ENCODE measurements at regions of chr3 and their contacts with region 1.

Region 1: DNA sequence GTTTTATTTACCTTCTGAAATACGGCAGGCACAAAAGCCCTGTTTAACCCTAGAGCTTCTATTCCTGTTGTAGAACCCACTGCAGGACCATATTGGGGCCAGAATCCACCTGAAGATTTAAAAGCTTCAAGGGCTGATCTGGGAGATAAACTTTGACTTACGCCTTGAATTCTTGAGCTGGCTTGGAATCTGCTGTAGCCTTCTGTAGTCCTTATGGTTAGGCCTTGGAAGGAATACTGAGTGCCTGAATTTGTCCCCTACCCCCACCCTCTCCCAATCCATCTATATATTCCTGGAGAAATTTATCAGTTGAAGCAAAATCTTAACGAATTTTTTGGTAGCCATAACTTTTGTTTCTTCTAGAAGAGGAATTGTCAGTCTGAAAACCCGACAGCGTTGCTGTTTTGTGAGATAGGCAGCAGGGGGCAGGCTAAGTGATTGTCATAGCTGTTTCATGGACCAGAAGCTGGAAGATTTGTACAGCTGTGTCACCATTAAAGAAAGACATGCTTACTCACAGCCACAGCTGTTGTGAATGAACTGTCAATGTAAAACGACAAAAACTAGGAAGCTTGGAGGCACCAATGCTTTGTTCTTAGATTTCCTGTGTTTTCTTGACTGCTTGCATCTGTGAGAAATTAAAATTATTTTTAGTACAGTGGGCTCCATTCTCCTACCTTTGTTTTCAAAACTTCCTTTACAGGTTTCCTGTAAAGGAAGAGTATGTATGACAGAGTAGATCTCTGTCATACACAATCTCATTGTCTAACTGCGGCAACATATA is 12.8 kb downstream of the LXN start:
- DNase-seq: peak; percentile 65
- ATAC-seq: peak; percentile 93
- H3K4me3 Mint-ChIP-seq: no peak overlapping the region
- H3K27ac Mint-ChIP-seq: no peak overlapping the region
- H3K4me1 Mint-ChIP-seq: peaks cover 13% of the 10 kb centered on the region
- H3K27me3 Mint-ChIP-seq: no peaks in the 10 kb centered on the region
- CTCF ChIP-seq: peak; percentile 60

Region 2: DNA sequence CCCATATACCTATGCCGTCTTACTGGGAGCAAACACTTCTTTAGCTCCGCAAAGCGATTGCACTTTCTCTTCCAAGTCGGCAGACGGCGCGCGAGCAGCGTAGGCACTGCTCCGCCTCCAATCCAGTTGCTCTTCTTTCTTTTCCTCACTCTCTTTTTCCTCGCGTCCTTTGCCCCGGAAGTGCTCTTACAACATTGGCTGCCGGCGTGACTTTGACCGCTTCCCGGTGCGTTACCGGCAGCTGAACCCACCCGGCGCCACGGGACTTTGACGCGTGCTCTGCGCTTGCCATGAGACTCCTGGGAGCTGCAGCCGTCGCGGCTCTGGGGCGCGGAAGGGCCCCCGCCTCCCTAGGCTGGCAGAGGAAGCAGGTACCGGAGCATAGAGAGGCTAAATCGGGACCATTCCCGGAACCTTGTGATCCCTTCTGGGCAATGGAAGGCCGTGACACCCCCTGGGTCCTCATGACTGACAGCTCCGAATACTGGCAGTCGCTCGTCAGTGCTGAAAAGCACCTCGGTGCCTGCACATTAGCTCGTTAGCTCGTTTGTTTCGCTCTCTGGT is 15.2 kb before region 1 on chr3 and contains the start of gene GFM1:
- CTCF ChIA-PET with region 1: interaction called, 65 read pairs
- POLR2A ChIA-PET with region 1: interaction called, 7 read pairs
- intact Hi-C with region 1: no loop called
- DNase-seq: peak; percentile 94
- ATAC-seq: peak; percentile 97
- H3K4me3 Mint-ChIP-seq: peak within 1 kb of the TSS; percentile 99
- H3K27ac Mint-ChIP-seq: peak within 1 kb of the TSS; percentile 96
- H3K4me1 Mint-ChIP-seq: peaks cover 37% of the 10 kb centered on the region
- H3K27me3 Mint-ChIP-seq: no peaks in the 10 kb centered on the region
- CTCF ChIP-seq: peak; percentile 79
- total RNA-seq, gene GFM1: 48.4 to 56.1 TPM

Region 3: GRCh38 chr3:158672293-158673176 is 12.9 kb after region 1 on chr3 and contains the start of gene LXN:
- CTCF ChIA-PET with region 1: interaction called, 32 read pairs
- POLR2A ChIA-PET with region 1: no interaction called
- intact Hi-C with region 1: no loop called
- DNase-seq: peak; percentile 86
- ATAC-seq: peak; percentile 99
- H3K4me3 Mint-ChIP-seq: peak within 1 kb of the TSS; percentile 84
- H3K27ac Mint-ChIP-seq: peak within 1 kb of the TSS; percentile 75
- H3K4me1 Mint-ChIP-seq: peaks cover 22% of the 10 kb centered on the region
- H3K27me3 Mint-ChIP-seq: no peaks in the 10 kb centered on the region
- CTCF ChIP-seq: peak; percentile 44
- total RNA-seq, gene LXN: 7.1 to 7.8 TPM

Region 4: DNA sequence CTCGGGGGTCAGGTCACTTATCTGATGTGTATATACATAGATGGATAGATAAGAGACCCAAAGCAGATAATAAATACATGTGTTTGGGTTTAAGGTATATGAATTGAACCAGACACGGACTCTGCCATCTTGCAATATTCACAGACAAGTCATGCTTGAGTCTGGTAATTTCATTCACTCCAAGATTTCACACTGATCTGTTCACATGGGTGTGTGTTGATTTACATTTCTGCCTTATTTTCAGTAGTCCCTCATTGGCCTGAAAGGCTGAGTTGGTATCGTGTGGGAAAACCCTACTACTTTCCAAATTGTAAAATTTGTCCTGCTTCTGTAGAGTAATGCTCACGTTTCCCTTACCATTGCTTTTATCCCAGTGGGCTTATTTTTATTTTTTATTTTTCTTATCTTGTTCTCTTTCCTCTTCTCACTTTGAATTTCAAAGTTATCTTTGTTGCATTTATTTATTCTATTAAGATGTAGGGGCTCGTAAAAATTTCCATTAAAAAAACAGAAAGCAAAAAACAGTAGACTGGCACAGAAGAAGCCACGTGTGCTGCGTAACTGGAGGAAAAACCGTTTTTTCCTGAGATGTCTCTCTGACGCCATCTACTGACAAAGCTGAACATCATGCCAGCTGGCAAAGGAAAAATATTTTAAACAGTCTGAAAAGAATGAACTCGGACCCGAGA is 131.4 kb after region 1 on chr3:
- CTCF ChIA-PET with region 1: interaction called, 19 read pairs
- POLR2A ChIA-PET with region 1: no interaction called
- intact Hi-C with region 1: loop called (anchors 5 kb)
- DNase-seq: peak; percentile 47
- ATAC-seq: peak; percentile 90
- H3K4me3 Mint-ChIP-seq: peak overlapping the region; percentile 70
- H3K27ac Mint-ChIP-seq: peak overlapping the region; percentile 63
- H3K4me1 Mint-ChIP-seq: peaks cover 3% of the 10 kb centered on the region
- H3K27me3 Mint-ChIP-seq: no peaks in the 10 kb centered on the region
- CTCF ChIP-seq: peak; percentile 86

Region 5: GRCh38 chr3:158801696-158802408 is 142.2 kb after region 1 on chr3 and contains the start of gene MFSD1:
- CTCF ChIA-PET with region 1: interaction called, 16 read pairs
- POLR2A ChIA-PET with region 1: no interaction called
- intact Hi-C with region 1: no loop called
- DNase-seq: peak; percentile 94
- ATAC-seq: peak; percentile 94
- H3K4me3 Mint-ChIP-seq: peak within 1 kb of the TSS; percentile 83
- H3K27ac Mint-ChIP-seq: peak within 1 kb of the TSS; percentile 66
- H3K4me1 Mint-ChIP-seq: peaks cover 20% of the 10 kb centered on the region
- H3K27me3 Mint-ChIP-seq: no peaks in the 10 kb centered on the region
- CTCF ChIP-seq: no peak
- total RNA-seq, gene MFSD1: 9.2 to 9.7 TPM

Region 6: DNA sequence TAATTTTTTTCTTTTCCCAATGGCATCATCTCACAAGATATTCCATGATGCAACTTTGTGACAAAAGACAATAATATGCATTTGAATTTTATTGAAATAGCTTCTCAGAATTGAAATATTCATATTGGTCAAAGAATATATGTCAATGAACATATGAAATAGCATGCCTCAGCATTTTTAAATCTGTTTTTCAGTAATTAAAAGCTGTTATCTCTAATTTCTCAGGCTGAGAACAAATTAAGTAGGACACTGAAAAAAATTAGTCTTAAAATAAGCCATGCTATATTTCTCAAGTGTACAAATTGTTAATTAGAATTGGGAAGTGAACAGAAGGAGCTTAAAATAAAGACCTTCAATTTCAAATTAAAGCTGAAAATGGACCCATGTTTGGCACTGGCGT is 712.3 kb after region 1 on chr3:
- CTCF ChIA-PET with region 1: no interaction called
- POLR2A ChIA-PET with region 1: no interaction called
- intact Hi-C with region 1: no loop called
- DNase-seq: no peak
- ATAC-seq: no peak
- H3K4me3 Mint-ChIP-seq: no peak overlapping the region
- H3K27ac Mint-ChIP-seq: no peak overlapping the region
- H3K4me1 Mint-ChIP-seq: no peaks in the 10 kb centered on the region
- H3K27me3 Mint-ChIP-seq: no peaks in the 10 kb centered on the region
- CTCF ChIP-seq: no peak